Activated naive CD4-positive, alpha-beta T cell treated with anti-CD3 and anti-CD28 coated beads, Interleukin-2, amount 10 ng/mL, durations not matched to agents 7 days and 5 days (primary cell): ENCODE measurements at regions of chr3 and their contacts with region 1.

Region 1: DNA sequence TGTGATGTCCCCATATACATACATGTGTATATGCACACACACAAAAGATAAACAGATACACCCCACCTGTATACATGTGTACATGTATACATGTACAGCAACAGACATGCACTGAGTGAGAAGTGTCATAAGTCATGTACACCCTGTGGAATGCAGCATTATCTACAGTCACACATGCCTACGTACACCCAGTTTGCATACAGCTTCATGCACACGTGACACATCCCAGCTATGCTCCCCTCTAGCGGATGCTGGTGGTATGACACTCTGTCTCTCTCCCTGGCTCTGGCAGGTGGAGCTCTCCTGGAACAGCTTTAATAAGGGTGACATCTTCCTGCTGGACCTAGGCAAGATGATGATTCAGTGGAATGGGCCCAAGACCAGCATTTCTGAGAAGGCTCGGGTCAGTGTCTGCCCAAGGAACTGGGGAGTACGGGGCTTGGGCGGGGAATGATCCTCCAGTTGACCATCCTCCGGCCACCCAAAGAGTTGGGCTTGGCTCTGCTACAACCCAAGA is 6.3 kb downstream of the VILL start:
- DNase-seq: peak; percentile 90
- H3K4me3 Mint-ChIP-seq: no peak overlapping the region
- H3K27ac Mint-ChIP-seq: peak overlapping the region; percentile 88
- H3K4me1 Mint-ChIP-seq: peaks cover 63% of the 10 kb centered on the region
- H3K27me3 Mint-ChIP-seq: peaks cover 2% of the 10 kb centered on the region

Region 2: DNA sequence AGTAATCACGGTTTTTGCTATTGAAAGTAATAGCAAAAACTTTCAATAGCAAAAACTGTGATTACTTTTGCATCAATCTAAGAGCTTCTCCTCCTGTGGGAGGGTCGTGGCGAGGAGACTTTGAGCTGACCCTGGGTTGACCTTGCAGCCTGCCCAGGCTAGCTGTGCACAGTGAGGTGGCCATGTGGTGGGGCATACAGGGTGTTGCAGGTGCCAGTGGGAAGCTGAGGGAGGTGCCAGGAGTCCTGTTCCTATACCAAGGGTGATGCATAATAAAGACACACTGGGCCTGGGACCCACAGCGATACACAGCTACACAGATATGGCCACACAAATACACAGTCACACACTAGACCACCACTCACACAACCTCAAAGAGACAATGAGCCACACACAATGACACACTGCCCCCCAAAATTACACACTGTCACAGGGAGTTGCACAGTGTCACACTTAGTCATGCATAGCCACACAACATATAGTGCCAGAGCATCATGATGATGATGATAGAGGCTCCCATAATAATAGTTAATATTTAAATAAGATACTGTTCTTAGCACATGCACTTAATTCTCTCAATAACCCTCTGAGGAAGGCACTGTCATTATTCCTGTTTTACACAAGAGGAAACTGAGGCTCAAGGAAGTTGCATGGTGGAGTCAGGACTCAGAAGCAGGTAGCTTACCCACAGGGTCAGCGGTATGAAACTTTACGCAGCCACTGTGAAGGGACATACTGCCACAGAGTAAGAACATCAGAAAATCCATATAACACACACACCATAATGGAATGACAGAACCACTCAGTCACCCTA is 26.3 kb after region 1 on chr3:
- CTCF ChIA-PET with region 1: interaction called, 10 read pairs
- DNase-seq: no peak
- H3K4me3 Mint-ChIP-seq: peak overlapping the region; percentile 78
- H3K27ac Mint-ChIP-seq: peak overlapping the region; percentile 96
- H3K4me1 Mint-ChIP-seq: peaks cover 37% of the 10 kb centered on the region
- H3K27me3 Mint-ChIP-seq: peaks cover 12% of the 10 kb centered on the region